ENCODE measurements at regions of chr6 and their contacts with region 1.

Region 1: GRCh38 chr6:157274471-157275226 is 48.7 kb downstream of the TMEM242 start:
- H3K4me3 Mint-ChIP-seq: peak overlapping the region; percentile 90
- H3K27ac Mint-ChIP-seq: peak overlapping the region; percentile 82
- H3K4me1 Mint-ChIP-seq: peaks cover 7% of the 10 kb centered on the region
- H3K27me3 Mint-ChIP-seq: peaks cover 27% of the 10 kb centered on the region

Region 2: GRCh38 chr6:155327326-155328073 is 1947.1 kb before region 1 on chr6:
- intact Hi-C with region 1: loop called (anchors 10 kb)
- H3K4me3 Mint-ChIP-seq: no peak overlapping the region
- H3K27ac Mint-ChIP-seq: no peak overlapping the region
- H3K4me1 Mint-ChIP-seq: peaks cover 6% of the 10 kb centered on the region
- H3K27me3 Mint-ChIP-seq: no peaks in the 10 kb centered on the region

Region 3: GRCh38 chr6:157021344-157021992 is 253.2 kb before region 1 on chr6:
- intact Hi-C with region 1: loop called (anchors 10 kb)
- H3K4me3 Mint-ChIP-seq: peak overlapping the region; percentile 87
- H3K27ac Mint-ChIP-seq: peak overlapping the region; percentile 99
- H3K4me1 Mint-ChIP-seq: peaks cover 28% of the 10 kb centered on the region
- H3K27me3 Mint-ChIP-seq: no peaks in the 10 kb centered on the region

Region 4: DNA sequence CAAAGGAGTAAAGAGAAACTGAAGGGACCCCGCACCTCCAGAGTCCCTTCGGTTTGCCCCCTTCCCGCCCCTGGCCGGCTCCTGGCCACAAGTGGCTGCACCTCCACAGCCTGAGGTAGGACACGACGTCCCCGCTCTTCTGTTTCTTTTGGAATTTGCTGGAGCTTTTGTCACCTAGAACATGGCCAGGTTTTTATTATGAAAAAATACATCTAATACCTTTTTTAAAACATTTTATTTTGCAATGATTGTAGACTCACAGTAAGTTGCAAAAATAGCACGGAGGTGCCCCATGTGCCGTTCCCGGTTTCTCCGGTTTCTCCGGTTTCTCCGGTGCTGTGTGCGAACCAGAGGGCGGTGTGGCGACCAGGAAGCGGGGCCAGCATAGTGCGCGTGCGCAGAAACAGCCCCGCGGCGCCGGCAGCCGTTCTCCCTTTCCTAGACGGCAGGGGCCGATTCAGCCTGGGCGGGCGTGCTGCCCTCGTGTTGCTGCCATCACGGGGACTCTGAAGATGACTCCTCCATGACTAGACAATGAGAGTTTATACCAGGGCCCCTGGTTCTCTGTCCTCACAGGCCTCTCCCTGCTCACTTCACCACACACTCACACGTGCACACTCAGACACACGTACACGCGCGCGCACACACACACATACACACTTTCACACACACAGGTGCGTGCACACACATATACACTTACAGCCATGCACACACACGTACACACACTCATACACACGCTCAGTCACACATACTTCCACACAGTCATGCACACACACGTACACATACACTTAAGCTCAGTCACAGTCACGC is 53.4 kb before region 1 on chr6:
- intact Hi-C with region 1: loop called (anchors 5 kb)
- H3K4me3 Mint-ChIP-seq: peak overlapping the region; percentile 67
- H3K27ac Mint-ChIP-seq: peak overlapping the region; percentile 10
- H3K4me1 Mint-ChIP-seq: peaks cover 25% of the 10 kb centered on the region
- H3K27me3 Mint-ChIP-seq: peaks cover 34% of the 10 kb centered on the region

Region 5: DNA sequence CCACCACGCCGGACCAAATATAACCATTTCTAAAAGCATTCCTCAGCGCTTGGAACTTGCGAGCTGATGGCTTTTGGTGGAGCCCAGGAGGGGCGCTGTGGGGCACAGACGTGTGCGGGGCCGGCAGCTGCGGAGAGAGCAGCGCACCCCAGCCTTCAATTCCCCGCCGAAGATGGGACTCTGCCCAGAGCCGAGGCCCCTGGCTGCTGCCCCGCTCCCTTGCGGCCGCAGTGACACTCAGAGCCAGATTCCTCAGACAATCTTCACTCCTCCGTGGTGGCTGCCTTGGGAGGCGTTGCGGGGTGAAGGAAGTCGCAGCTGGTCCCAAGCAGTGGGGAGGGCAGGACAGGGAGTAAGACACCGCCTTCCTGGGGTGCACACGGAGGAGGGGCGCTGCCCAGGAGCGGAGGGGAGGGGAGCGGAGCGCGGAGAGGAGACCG is 39.0 kb before region 1 on chr6:
- intact Hi-C with region 1: no loop called
- H3K4me3 Mint-ChIP-seq: peak overlapping the region; percentile 81
- H3K27ac Mint-ChIP-seq: peak overlapping the region; percentile 40
- H3K4me1 Mint-ChIP-seq: peaks cover 13% of the 10 kb centered on the region
- H3K27me3 Mint-ChIP-seq: peaks cover 62% of the 10 kb centered on the region

Measured in dendritic cell treated with granulocyte-macrophage colony-stimulating factor and Interleukin-4, amounts not matched to agents 40 ng/mL and 50 ng/mL, for 4 days (primary cell).